Naive thymus-derived CD4-positive, alpha-beta T cell (primary cell): ENCODE measurements at regions of chr3 and their contacts with region 1.

Region 1: GRCh38 chr3:150408221-150409102 is at the start of gene TSC22D2:
- DNase-seq: peak; percentile 94 to 99 (median 98)
- ATAC-seq: peak; percentile 79
- H3K4me3 ChIP-seq: peak within 1 kb of the TSS; percentile 96
- H3K4me3 Mint-ChIP-seq: peak within 1 kb of the TSS; percentile 88 to 98 (median 91)
- H3K27ac ChIP-seq: peak within 1 kb of the TSS; percentile 98
- H3K27ac Mint-ChIP-seq: peak within 1 kb of the TSS; percentile 89 to 100 (median 98)
- H3K4me1 ChIP-seq: peaks cover 7 to 8% of the 10 kb centered on the region in 2 donors
- H3K4me1 Mint-ChIP-seq: peaks cover 25 to 41% (median 39%) of the 10 kb centered on the region in 7 donors
- H3K27me3 ChIP-seq: no peaks in the 10 kb centered on the region
- H3K27me3 Mint-ChIP-seq: peaks cover 0 to 13% (median 0%) of the 10 kb centered on the region in 5 donors
- total RNA-seq, gene TSC22D2: 17.9 to 42.1 (median 27.3) TPM

Region 2: DNA sequence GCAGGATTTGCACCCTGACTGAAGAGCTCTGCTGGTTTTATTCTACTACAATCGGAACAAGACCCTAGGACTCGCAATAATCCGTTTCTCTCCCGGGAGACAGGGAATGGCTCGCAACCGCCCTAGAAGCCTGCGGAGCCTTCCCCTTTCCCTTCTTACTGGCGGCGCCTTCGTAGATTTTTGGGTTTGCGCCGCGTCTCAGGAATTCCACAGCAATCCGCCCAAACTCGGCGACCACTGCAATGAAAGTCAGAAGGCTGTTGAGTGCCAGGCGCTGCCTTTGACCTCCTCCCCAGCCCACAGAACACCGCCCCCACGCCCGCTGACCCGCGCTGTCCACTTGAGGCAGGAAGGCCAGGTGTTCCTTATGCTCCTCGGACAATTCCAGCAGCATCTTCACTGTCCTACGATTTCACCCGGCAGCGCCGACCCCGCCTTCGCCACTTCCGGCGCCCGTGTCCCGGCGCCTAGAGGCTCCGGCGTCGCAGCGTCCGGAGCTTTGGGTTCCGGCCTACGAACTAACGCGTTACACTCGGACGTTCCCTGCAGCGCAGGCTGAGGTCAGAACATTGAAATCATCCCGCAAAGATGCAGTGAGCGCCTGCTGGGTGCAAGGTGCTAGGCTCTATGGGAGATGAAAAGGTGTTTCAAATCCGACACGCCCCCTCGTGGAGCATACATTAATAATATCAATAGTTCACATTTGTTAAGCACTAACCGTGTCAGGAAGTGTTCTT is 656.2 kb before region 1 on chr3 and contains the start of gene COMMD2:
- CTCF ChIA-PET with region 1: no interaction called
- POLR2A ChIA-PET with region 1: no interaction called
- intact Hi-C with region 1: loop called in 1 of 2 experiments (anchors 1 kb)
- DNase-seq: peak; percentile 52 to 76 (median 63)
- ATAC-seq: peak; percentile 91
- H3K4me3 ChIP-seq: peak within 1 kb of the TSS; percentile 81
- H3K4me3 Mint-ChIP-seq: peak within 1 kb of the TSS; percentile 94 to 98 (median 96)
- H3K27ac ChIP-seq: peak within 1 kb of the TSS; percentile 73
- H3K27ac Mint-ChIP-seq: peak within 1 kb of the TSS; percentile 90 to 97 (median 96)
- H3K4me1 ChIP-seq: peaks cover 9 to 20% of the 10 kb centered on the region in 2 donors
- H3K4me1 Mint-ChIP-seq: peaks cover 12 to 56% (median 32%) of the 10 kb centered on the region in 7 donors
- H3K27me3 ChIP-seq: no peaks in the 10 kb centered on the region
- H3K27me3 Mint-ChIP-seq: peaks cover 0 to 2% (median 0%) of the 10 kb centered on the region in 5 donors
- total RNA-seq, gene COMMD2: 29.9 to 44.4 (median 33.4) TPM

Region 3: GRCh38 chr3:150371741-150372254 is 36.7 kb before region 1 on chr3:
- CTCF ChIA-PET with region 1: no interaction called
- POLR2A ChIA-PET with region 1: no interaction called
- intact Hi-C with region 1: loop called (anchors 5 kb)
- DNase-seq: no peak
- ATAC-seq: no peak
- H3K4me3 ChIP-seq: no peak overlapping the region
- H3K4me3 Mint-ChIP-seq: no peak overlapping the region
- H3K27ac ChIP-seq: no peak overlapping the region
- H3K27ac Mint-ChIP-seq: no peak overlapping the region
- H3K4me1 ChIP-seq: no peaks in the 10 kb centered on the region
- H3K4me1 Mint-ChIP-seq: peaks cover 0 to 7% (median 0%) of the 10 kb centered on the region in 7 donors
- H3K27me3 ChIP-seq: no peaks in the 10 kb centered on the region
- H3K27me3 Mint-ChIP-seq: peaks cover 0 to 6% (median 0%) of the 10 kb centered on the region in 5 donors

Region 4: DNA sequence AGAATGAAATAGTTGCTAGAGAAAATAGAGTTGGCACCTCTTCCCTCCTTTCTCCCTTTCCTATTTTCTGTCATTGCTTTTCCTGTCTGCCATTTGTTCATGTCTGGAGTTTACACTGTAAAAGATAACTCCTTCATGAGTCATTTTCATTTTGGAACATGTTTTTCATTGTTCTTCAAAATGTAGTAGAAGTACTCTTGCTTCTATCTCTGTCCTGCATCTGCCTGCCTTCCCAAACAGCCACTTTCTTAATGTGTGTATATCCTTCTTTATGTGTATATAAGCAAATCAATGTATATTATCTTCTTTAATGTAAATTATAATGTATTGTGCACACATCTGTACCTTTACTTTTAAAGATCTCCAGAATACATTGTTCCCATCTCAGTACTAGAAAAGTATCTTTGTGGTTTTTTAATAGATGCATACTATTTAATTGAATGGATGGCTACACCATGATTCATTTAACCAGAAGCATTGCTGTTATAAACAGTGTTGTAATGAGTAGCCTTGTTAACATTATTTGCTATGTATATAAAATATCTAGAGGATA is 40.8 kb after region 1 on chr3:
- CTCF ChIA-PET with region 1: no interaction called
- POLR2A ChIA-PET with region 1: interaction called, 4 read pairs
- intact Hi-C with region 1: loop called in 1 of 2 experiments (anchors 2 kb)
- DNase-seq: no peak
- ATAC-seq: no peak
- H3K4me3 ChIP-seq: no peak overlapping the region
- H3K4me3 Mint-ChIP-seq: peak overlapping the region in 1 of 10 donors; percentile 2
- H3K27ac ChIP-seq: no peak overlapping the region
- H3K27ac Mint-ChIP-seq: peak overlapping the region in 2 of 9 donors; percentile 10 to 37
- H3K4me1 ChIP-seq: peaks cover 3 to 4% of the 10 kb centered on the region in 2 donors
- H3K4me1 Mint-ChIP-seq: peaks cover 18 to 64% (median 52%) of the 10 kb centered on the region in 7 donors
- H3K27me3 ChIP-seq: no peaks in the 10 kb centered on the region
- H3K27me3 Mint-ChIP-seq: no peaks in the 10 kb centered on the region

Region 5: GRCh38 chr3:150703299-150704134 is 295.1 kb after region 1 on chr3 and contains the start of gene ERICH6:
- CTCF ChIA-PET with region 1: no interaction called
- POLR2A ChIA-PET with region 1: interaction called, 4 read pairs
- intact Hi-C with region 1: loop called (anchors 1 to 2 kb)
- DNase-seq: peak; percentile 59 to 83 (median 71)
- ATAC-seq: peak; percentile 93
- H3K4me3 ChIP-seq: peak within 1 kb of the TSS; percentile 94
- H3K4me3 Mint-ChIP-seq: peak within 1 kb of the TSS; percentile 82 to 98 (median 97)
- H3K27ac ChIP-seq: peak within 1 kb of the TSS; percentile 84
- H3K27ac Mint-ChIP-seq: peak within 1 kb of the TSS; percentile 93 to 100 (median 97)
- H3K4me1 ChIP-seq: peaks cover 4 to 5% of the 10 kb centered on the region in 2 donors
- H3K4me1 Mint-ChIP-seq: peaks cover 11 to 24% (median 20%) of the 10 kb centered on the region in 7 donors
- H3K27me3 ChIP-seq: no peaks in the 10 kb centered on the region
- H3K27me3 Mint-ChIP-seq: peaks cover 0 to 6% (median 0%) of the 10 kb centered on the region in 5 donors
- total RNA-seq, gene ERICH6: 0.24 to 1.4 (median 0.53) TPM